Activated T-helper 1 cell treated with anti-CD3 and anti-CD28 coated beads, Interleukin-12 subunit alpha, Interleukin-12 subunit beta, Interleukin-2, Interleukin-4 antibody, amounts not matched to agents 30 ng/mL and 10 ng/mL and 1 ng/mL, durations not matched to agents 14 hours and 24 hours and 36 hours (primary cell): ENCODE measurements at regions of chr6 and their contacts with region 1.

Region 1: GRCh38 chr6:97282726-97283617 is at the start of gene MMS22L:
- DNase-seq: peak; percentile 92
- H3K4me3 Mint-ChIP-seq: peak within 1 kb of the TSS; percentile 93
- H3K27ac Mint-ChIP-seq: peak within 1 kb of the TSS; percentile 80
- H3K4me1 Mint-ChIP-seq: peaks cover 28% of the 10 kb centered on the region
- H3K27me3 Mint-ChIP-seq: peaks cover 13% of the 10 kb centered on the region
- total RNA-seq, gene MMS22L: 49.7 and 57.1 TPM in 2 replicates

Region 2: GRCh38 chr6:96521644-96522464 is 761.1 kb before region 1 on chr6 and contains the start of gene UFL1:
- intact Hi-C with region 1: loop called (anchors 1 kb)
- DNase-seq: peak; percentile 89
- H3K4me3 Mint-ChIP-seq: peak within 1 kb of the TSS; percentile 100
- H3K27ac Mint-ChIP-seq: peak within 1 kb of the TSS; percentile 100
- H3K4me1 Mint-ChIP-seq: peaks cover 24% of the 10 kb centered on the region
- H3K27me3 Mint-ChIP-seq: no peaks in the 10 kb centered on the region
- total RNA-seq, gene UFL1: 22.0 and 22.7 TPM in 2 replicates

Region 3: DNA sequence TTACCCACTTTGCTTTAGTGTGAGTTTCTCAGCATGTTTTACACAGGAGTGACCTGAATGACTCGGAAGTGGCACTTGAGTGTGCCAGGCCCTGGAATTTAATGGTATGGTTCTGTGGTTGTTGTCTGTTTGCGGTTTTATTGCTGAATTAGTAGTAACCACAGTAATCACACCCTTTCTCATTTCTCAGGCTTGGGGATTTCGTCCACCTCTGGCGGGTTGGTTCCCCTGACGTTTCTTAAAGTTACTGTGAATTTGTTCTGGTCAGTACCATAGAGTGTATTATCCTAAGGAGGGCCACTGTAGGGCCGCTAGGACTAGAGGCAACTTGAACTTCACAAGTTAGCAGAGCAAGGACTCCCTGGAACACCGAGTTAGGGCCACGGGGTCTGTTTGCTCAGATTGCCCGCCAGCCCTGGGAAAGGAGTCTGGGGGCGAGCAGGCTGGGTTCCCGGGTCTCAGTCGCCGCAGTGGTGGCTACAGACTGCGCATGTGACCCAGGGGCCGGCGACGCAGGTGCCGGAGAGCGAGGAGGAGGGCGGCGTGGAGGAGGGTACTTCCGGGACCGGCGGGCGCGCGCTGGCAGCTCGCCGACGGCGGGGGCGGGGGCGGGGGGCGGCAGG is 359.0 kb before region 1 on chr6:
- intact Hi-C with region 1: loop called (anchors 2 kb)
- DNase-seq: no peak
- H3K4me3 Mint-ChIP-seq: peak overlapping the region; percentile 87
- H3K27ac Mint-ChIP-seq: peak overlapping the region; percentile 85
- H3K4me1 Mint-ChIP-seq: peaks cover 33% of the 10 kb centered on the region
- H3K27me3 Mint-ChIP-seq: peaks cover 2% of the 10 kb centered on the region

Region 4: DNA sequence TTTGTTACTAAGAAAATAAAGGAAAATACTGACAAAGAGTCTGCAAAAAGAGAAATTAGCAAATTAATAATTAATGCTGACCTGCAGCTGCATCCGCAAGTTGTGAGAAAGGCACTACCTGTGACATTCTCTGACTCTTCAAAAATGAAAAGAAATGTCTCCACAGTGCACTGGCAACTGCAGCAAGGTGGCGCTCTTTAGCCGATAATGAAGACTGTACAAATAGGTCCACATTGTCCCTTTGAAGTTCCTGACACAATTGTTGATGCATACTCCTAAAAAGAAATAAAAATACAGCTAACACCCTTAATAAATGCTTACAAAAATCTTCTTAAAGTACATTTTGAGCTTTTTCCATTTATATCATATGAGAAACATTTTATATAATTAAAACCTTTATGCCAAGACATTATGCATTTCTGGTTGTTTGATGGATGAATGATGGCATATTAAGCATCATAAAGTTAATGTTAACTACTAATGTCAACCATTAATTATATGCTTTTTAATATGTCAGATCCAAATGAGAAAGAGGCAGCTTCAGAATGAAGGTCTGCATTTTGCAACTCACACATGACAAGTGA is 96.5 kb before region 1 on chr6:
- intact Hi-C with region 1: loop called (anchors 5 kb)
- DNase-seq: peak; percentile 29
- H3K4me3 Mint-ChIP-seq: no peak overlapping the region
- H3K27ac Mint-ChIP-seq: no peak overlapping the region
- H3K4me1 Mint-ChIP-seq: no peaks in the 10 kb centered on the region
- H3K27me3 Mint-ChIP-seq: no peaks in the 10 kb centered on the region

Region 5: DNA sequence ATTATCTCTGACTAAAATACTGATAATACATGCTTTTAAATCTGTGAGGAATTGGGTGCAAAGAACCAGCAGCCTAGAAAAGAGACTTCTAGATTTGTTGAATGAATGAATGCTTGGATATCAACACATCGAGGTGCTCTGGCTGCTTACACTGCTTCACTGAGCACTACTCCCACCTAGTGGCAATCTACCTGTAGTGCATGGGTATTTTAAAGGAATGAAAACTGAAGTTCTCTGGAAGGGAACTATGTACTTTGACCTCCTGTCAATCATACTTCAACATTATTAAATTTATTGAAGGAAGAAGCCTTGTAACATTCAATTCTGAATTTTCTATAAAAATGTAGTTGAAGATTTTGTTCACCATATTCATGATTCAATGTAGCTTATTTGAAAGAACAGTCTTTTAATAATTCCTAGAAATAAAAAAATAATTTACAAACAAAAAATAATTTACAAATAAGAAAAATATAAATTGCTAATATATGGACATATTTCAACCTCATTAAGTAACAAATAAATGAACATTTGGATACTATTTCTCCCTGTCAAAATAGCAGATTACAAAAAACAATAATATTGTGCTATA is 111.3 kb after region 1 on chr6:
- intact Hi-C with region 1: loop called (anchors 2 kb)
- DNase-seq: peak; percentile 24
- H3K4me3 Mint-ChIP-seq: no peak overlapping the region
- H3K27ac Mint-ChIP-seq: no peak overlapping the region
- H3K4me1 Mint-ChIP-seq: no peaks in the 10 kb centered on the region
- H3K27me3 Mint-ChIP-seq: peaks cover 13% of the 10 kb centered on the region